ENCODE measurements at regions of chr1 and their contacts with region 1.

Region 1: DNA sequence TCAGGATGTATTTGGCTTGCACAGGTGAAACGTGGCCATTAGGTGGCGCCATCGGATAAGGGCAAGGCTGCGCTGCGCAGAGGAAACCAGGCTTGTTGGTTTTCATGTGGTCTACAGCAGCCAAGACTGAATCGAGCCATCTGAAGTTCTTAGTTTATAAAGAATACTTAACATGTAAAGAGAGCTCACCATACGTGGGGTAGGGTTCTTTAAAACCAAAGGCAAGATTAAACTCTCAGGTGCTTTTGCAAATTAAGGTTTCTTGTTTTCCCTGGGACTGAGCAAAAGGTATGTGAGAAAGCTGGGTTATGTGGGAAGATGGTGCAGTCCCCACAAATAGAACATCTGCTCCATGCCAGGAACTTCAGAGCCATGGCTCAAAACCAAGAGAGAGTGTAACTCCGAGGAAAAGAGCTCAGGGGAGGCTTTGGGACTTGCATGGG is 9.3 kb downstream of the MASP2 start:
- DNase-seq: peak; percentile 90
- ATAC-seq: peak; percentile 98
- H3K4me3 ChIP-seq: no peak overlapping the region
- H3K4me3 Mint-ChIP-seq: no peak overlapping the region
- H3K27ac ChIP-seq: no peak overlapping the region
- H3K27ac Mint-ChIP-seq: no peak overlapping the region
- H3K4me1 ChIP-seq: peaks cover 0 to 3% of the 10 kb centered on the region in 2 donors
- H3K4me1 Mint-ChIP-seq: peaks cover 4% of the 10 kb centered on the region
- H3K27me3 ChIP-seq: peaks cover 0 to 13% (median 2%) of the 10 kb centered on the region in 4 experiments
- H3K27me3 Mint-ChIP-seq: peaks cover 7% of the 10 kb centered on the region
- CTCF ChIP-seq: peak; percentile 99

Region 2: GRCh38 chr1:11053758-11054137 is 16.0 kb after region 1 on chr1:
- CTCF ChIA-PET with region 1: interaction called, 14 read pairs
- POLR2A ChIA-PET with region 1: no interaction called
- intact Hi-C with region 1: no loop called
- DNase-seq: no peak
- ATAC-seq: no peak
- H3K4me3 ChIP-seq: no peak overlapping the region
- H3K4me3 Mint-ChIP-seq: no peak overlapping the region
- H3K27ac ChIP-seq: no peak overlapping the region
- H3K27ac Mint-ChIP-seq: no peak overlapping the region
- H3K4me1 ChIP-seq: peaks cover 3 to 11% of the 10 kb centered on the region in 2 donors
- H3K4me1 Mint-ChIP-seq: peaks cover 15% of the 10 kb centered on the region
- H3K27me3 ChIP-seq: no peaks in the 10 kb centered on the region
- H3K27me3 Mint-ChIP-seq: no peaks in the 10 kb centered on the region
- CTCF ChIP-seq: no peak

Region 3: GRCh38 chr1:11078631-11079030 is 40.9 kb after region 1 on chr1:
- CTCF ChIA-PET with region 1: interaction called, 14 read pairs
- POLR2A ChIA-PET with region 1: interaction called, 6 read pairs
- intact Hi-C with region 1: no loop called
- DNase-seq: no peak
- ATAC-seq: no peak
- H3K4me3 ChIP-seq: no peak overlapping the region
- H3K4me3 Mint-ChIP-seq: no peak overlapping the region
- H3K27ac ChIP-seq: no peak overlapping the region
- H3K27ac Mint-ChIP-seq: no peak overlapping the region
- H3K4me1 ChIP-seq: no peaks in the 10 kb centered on the region
- H3K4me1 Mint-ChIP-seq: no peaks in the 10 kb centered on the region
- H3K27me3 ChIP-seq: no peaks in the 10 kb centered on the region
- H3K27me3 Mint-ChIP-seq: no peaks in the 10 kb centered on the region
- CTCF ChIP-seq: no peak

Region 4: DNA sequence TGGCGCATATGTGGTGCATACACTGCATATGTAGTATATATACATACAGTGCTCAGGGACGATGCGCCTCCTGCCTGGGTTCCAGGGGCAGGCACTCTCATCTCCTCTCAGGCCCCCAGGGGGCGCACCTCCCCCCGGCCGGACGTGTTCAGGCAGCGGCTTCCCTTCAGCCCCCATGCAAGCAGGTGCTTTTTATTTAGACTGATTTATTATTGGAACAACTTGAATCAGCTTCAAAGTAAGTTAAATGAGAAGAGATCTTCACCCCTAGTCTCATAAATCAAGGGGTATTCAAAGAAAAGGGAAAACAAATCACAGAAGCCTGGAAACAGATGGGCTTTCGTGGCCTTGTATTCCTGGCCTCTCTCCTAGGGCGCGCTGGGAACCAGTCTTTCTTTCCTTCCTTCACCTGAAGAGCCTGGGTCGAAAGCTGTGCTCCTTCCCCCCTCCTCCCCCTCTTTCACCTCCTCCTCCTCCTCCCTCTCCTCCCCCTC is 299.9 kb after region 1 on chr1:
- CTCF ChIA-PET with region 1: interaction called, 10 read pairs
- POLR2A ChIA-PET with region 1: no interaction called
- intact Hi-C with region 1: no loop called
- DNase-seq: peak; percentile 72
- ATAC-seq: peak; percentile 56
- H3K4me3 ChIP-seq: no peak overlapping the region
- H3K4me3 Mint-ChIP-seq: no peak overlapping the region
- H3K27ac ChIP-seq: no peak overlapping the region
- H3K27ac Mint-ChIP-seq: no peak overlapping the region
- H3K4me1 ChIP-seq: peaks cover 16 to 23% of the 10 kb centered on the region in 2 donors
- H3K4me1 Mint-ChIP-seq: peaks cover 23% of the 10 kb centered on the region
- H3K27me3 ChIP-seq: peaks cover 0 to 20% (median 6%) of the 10 kb centered on the region in 4 experiments
- H3K27me3 Mint-ChIP-seq: peaks cover 23% of the 10 kb centered on the region
- CTCF ChIP-seq: peak; percentile 87

Region 5: DNA sequence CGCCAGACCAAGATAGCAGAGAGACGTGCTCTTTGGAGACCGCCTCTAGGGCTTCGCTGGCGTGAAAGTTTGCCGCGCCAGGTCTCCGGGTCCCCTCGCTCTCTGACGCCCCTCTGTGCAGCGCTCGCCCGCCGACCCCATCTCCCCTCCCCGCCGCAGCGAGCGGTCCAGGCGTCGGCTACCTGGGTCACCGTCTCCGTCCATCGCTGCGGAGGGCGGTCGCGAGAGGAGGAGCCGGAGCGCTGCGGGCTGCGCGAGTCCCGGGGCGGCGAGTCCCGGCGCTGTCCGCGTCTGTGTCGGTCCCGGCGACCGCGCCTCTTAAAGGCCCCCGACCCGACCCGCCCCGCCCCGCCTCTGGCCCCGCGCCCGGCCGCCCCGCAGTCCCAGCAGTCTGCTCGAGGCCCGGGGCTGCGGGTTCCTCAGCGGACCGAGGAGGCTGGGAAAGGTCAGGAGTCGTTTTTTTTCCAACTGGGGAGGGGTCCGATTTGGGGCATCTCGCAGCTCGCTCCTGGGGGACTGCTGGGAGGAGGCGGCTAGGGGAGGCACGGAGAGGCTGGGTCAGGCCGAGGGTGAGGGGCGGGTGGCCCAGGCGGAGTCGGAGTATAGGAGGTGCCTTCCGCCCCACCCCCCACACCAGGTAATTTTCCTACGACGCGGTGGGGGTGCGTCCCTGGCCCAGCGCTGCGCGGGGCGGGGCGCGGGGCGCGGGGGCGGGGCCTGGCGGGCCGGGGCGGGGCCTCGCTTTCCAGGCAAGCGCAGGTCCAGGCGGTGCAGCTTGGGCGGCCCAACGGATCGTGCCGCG is 616.6 kb after region 1 on chr1 and contains the starts of genes FBXO2 and FBXO44:
- CTCF ChIA-PET with region 1: interaction called, 31 read pairs
- POLR2A ChIA-PET with region 1: interaction called, 11 read pairs
- intact Hi-C with region 1: no loop called
- DNase-seq: peak; percentile 77
- ATAC-seq: peak; percentile 86
- H3K4me3 ChIP-seq: peak within 1 kb of the TSS in 4 of 5 experiments; percentile 69 to 82 (median 74)
- H3K4me3 Mint-ChIP-seq: peak within 1 kb of the TSS; percentile 84
- H3K27ac ChIP-seq: peak within 1 kb of the TSS in 1 of 2 donors; percentile 25
- H3K27ac Mint-ChIP-seq: peak within 1 kb of the TSS; percentile 50
- H3K4me1 ChIP-seq: peaks cover 22 to 35% of the 10 kb centered on the region in 2 donors
- H3K4me1 Mint-ChIP-seq: peaks cover 28% of the 10 kb centered on the region
- H3K27me3 ChIP-seq: no peaks in the 10 kb centered on the region
- H3K27me3 Mint-ChIP-seq: no peaks in the 10 kb centered on the region
- CTCF ChIP-seq: no peak
- total RNA-seq, gene FBXO2: 9.6 and 10.7 TPM in 2 replicates
- total RNA-seq, gene FBXO44: 58.6 and 61.5 TPM in 2 replicates